Mammary epithelial cell (primary cell): ENCODE measurements at regions of chr1 and their contacts with region 1.

Region 1: GRCh38 chr1:27979151-27979858 is 19.5 kb downstream of the XKR8 start:
- DNase-seq: peak; percentile 41
- H3K4me3 ChIP-seq: no peak overlapping the region
- H3K27ac ChIP-seq: no peak overlapping the region
- H3K4me1 ChIP-seq: no peaks in the 10 kb centered on the region
- H3K27me3 ChIP-seq: no peaks in the 10 kb centered on the region
- CTCF ChIP-seq: peak; percentile 45 to 60

Region 2: GRCh38 chr1:27906759-27907158 is 72.5 kb before region 1 on chr1:
- CTCF ChIA-PET with region 1: no interaction called
- dilution Hi-C with region 1: no loop called
- in situ Hi-C with region 1: no loop called
- intact Hi-C with region 1: no loop called
- DNase-seq: no peak
- H3K4me3 ChIP-seq: no peak overlapping the region
- H3K27ac ChIP-seq: no peak overlapping the region
- H3K4me1 ChIP-seq: no peaks in the 10 kb centered on the region
- H3K27me3 ChIP-seq: no peaks in the 10 kb centered on the region
- CTCF ChIP-seq: no peak

Region 3: DNA sequence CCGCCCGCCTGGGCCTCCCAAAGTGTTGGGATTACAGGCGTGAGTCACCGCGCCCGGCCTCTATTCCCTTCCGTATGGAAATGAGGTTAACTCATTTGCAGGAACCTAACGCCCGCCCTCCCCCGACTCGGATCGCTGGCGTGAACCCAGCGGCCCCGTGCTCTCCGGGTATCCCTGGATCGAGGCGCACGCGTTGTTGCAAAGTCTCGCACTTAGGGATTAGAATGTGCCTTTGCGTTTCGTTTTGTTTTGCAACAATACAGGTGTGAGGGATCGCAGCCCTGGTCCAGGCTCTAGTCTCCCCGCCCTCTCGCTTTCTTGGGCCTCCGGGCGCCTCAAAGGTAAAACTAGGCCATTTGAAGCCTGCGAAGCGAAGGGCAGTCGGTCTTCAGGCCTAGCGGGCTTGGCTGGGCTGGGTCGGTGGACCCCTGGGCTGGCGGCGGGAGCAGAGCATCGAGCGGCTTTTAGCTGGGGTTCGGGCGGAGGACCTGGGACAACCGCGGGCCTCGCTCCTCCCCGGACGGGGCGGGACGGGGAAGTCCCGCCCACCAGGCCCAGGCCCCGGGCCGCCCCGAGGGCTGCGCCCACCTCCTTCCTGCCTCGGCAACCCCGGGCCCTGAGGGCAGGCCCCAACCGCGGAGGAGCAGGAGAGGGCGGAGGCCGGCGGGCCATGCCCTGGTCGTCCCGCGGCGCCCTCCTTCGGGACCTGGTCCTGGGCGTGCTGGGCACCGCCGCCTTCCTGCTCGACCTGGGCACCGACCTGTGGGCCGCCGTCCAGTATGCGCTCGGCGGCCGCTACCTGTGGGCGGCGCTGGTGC is 19.7 kb before region 1 on chr1 and contains the start of gene XKR8:
- CTCF ChIA-PET with region 1: no interaction called
- dilution Hi-C with region 1: no loop called
- in situ Hi-C with region 1: no loop called
- intact Hi-C with region 1: loop called (anchors 1 kb)
- DNase-seq: peak; percentile 82
- H3K4me3 ChIP-seq: peak within 1 kb of the TSS; percentile 48 to 74 (median 54)
- H3K27ac ChIP-seq: peak within 1 kb of the TSS; percentile 30
- H3K4me1 ChIP-seq: peaks cover 17% of the 10 kb centered on the region
- H3K27me3 ChIP-seq: no peaks in the 10 kb centered on the region
- CTCF ChIP-seq: peak in 1 of 2 donors; percentile 41
- total RNA-seq, gene XKR8: 4.3 to 4.5 TPM